ENCODE measurements at regions of chr17 and their contacts with region 1.

Region 1: DNA sequence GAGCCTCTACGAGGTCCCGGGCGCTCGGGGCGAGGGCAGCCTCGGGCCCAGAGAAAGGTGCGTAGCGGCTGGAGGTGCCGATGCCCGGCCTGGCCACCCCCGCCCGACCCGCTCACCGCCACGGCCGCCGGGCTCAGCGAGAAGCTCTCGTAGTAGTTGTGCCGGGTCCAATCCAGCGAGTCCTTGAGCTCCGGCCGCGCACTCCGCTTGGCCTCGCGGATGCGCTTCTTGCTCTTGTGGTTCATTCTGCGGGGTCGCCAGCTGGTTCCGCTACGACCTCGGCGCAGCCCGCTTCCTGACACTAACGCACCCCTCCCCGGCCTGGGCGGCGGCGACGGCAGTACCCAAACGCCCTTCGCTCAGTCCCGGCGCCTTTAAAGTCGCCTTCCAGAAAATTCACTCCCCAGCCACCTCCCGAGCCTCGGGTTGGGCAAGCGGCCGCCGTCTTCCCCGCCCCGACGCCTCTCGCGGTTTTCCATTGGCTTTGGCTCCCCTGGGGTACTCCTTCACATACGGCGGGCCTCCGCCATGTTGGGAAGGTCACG is at the start of gene JMJD6:
- DNase-seq: peak; percentile 75
- H3K4me3 ChIP-seq: peak within 1 kb of the TSS; percentile 91
- CTCF ChIP-seq: no peak

Region 2: DNA sequence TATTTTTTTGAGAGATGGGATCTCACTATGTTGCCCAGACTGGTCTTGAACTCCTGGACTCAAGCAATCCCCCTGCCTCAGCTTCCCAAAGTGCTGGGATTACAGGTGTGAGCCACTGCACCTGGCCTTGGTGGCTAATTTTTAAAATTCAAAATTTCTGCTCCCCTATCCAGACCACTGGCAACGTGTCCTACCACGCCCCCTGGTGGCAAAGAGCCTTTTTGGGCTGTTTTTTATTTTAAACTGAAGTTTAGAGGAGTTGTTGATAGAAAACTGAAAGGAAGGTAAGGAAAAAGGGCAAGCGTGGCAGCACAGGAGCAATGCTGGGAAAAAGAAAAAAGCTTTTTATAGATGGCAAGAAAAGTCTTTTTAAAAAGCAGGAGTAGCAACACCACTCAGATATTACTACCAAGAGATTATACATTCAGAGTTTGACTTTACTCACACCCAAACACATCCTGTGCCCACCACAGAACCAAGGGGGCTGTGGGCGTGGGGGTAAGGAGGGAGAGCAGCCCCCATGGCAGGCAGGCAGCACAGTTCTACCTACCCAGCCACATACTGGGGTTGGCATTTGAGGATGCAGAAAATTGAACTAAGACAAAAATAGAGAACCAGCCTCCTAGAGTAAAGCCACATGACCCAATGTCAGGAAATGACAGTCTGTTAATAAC is 11.3 kb before region 1 on chr17:
- CTCF ChIA-PET with region 1: interaction called, 74 read pairs
- POLR2A ChIA-PET with region 1: interaction called, 28 read pairs
- DNase-seq: no peak
- H3K4me3 ChIP-seq: no peak overlapping the region
- CTCF ChIP-seq: peak; percentile 61

Region 3: DNA sequence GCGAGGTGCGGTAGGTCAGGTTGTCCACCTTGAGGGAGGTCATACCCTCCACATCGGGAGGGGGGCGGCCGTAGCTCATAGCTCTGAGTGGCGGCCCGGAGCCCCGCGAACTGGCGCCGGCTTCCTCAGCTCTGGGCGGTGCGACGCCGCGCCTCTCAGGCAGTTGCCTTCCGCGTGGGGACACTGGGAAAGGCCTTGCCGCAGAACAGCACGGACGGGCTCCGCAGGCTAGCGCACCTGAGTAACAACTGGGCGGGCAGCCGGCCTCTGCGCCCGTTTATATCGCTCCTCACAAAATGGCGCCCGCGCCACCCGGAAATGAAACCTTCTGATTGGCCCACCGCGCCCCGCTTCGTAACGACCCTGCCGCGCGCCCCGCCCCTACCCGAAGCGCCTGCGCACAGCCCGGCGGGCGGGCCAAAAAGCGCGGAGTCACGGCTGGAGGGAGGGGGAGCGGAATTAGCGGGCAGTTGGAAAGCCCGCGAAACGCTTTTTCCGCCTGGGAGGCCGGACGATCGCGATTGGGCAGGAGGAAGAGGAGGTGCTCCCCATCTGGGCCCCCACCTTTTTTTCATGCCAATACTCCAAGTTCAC is 10.9 kb after region 1 on chr17 and contains the start of gene SRSF2:
- CTCF ChIA-PET with region 1: interaction called, 9 read pairs
- POLR2A ChIA-PET with region 1: interaction called, 23 read pairs
- DNase-seq: peak; percentile 84
- H3K4me3 ChIP-seq: peak within 1 kb of the TSS; percentile 97
- CTCF ChIP-seq: no peak

Region 4: DNA sequence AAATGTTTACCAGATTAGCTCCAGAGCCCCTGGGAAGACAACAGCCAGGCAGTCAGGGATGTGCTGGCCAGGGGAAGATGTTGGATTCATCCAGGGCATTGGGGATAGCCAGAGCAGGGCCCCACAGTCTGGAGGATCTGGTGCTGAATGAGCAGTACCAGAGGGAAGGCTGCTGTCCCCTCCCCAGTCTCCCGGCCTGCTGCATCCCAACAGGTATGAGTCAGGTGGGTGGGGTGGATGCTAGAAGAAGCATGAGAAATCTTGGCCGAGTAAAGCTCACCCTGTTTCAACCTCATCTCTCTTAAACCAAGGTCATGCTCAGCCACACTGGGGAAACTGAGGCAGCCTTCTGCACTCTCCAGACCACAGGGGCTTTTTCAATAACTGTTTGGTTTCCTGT is 342.6 kb after region 1 on chr17:
- CTCF ChIA-PET with region 1: interaction called, 10 read pairs
- POLR2A ChIA-PET with region 1: no interaction called
- DNase-seq: no peak
- H3K4me3 ChIP-seq: no peak overlapping the region
- CTCF ChIP-seq: no peak

Measured in AG04449 (cell line).